ENCODE measurements at regions of chr1 and their contacts with region 1.

Region 1: DNA sequence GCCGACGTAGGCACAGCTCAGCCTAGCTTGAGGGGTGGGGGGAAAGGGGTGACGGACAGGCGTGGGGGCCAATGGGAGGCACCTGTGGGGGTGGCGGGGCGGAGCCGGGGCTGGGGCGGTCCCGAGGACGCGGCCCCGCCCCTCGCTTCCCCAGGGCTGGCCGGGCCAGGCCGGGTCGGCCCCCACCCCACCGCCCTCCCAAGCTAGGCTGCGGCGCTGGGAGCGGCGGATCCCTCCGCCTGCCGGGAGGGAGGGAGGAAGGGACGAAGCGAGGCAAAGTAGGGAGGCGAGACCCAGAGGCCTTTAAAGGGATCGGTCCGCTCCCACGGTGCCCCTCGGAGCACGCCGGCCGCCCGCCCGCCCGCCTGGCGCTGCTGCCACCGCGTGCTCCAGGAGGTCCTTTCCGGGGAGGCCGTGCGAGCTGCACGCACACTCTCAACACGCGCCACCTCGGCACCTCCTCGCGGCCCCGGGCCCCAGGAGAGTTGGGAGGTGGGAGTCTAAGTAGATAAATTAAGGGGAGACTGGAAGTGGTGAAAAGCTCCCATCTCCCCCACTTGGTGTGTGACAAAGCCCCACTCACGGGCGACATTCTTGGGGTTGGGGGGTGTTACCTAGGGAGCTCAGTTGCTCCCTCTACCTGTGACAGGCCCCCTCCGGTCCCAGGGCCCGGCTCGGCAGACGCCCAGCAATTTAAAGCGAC is 373 bp upstream of the MEF2D start:
- DNase-seq: peak; percentile 86 to 97 (median 94)
- ATAC-seq: peak; percentile 66
- H3K4me3 ChIP-seq: peak overlapping the region; percentile 87 to 92
- H3K4me3 Mint-ChIP-seq: peak overlapping the region; percentile 92
- H3K27ac ChIP-seq: peak overlapping the region; percentile 93 to 97
- H3K27ac Mint-ChIP-seq: peak overlapping the region; percentile 98
- H3K4me1 ChIP-seq: peaks cover 76% of the 10 kb centered on the region
- H3K4me1 Mint-ChIP-seq: peaks cover 76% of the 10 kb centered on the region
- H3K27me3 ChIP-seq: no peaks in the 10 kb centered on the region
- H3K27me3 Mint-ChIP-seq: no peaks in the 10 kb centered on the region
- CTCF ChIP-seq: peak; percentile 68

Region 2: GRCh38 chr1:156338180-156338973 is 162.6 kb before region 1 on chr1 and contains the starts of genes CCT3 and TSACC:
- CTCF ChIA-PET with region 1: no interaction called
- POLR2A ChIA-PET with region 1: no interaction called
- intact Hi-C with region 1: loop called (anchors 1 to 2 kb)
- DNase-seq: peak; percentile 97 to 100 (median 99)
- ATAC-seq: peak; percentile 95
- H3K4me3 ChIP-seq: peak within 1 kb of the TSS; percentile 69 to 85
- H3K4me3 Mint-ChIP-seq: peak within 1 kb of the TSS; percentile 95
- H3K27ac ChIP-seq: peak within 1 kb of the TSS; percentile 61 to 92
- H3K27ac Mint-ChIP-seq: peak within 1 kb of the TSS; percentile 95
- H3K4me1 ChIP-seq: peaks cover 25% of the 10 kb centered on the region
- H3K4me1 Mint-ChIP-seq: peaks cover 39% of the 10 kb centered on the region
- H3K27me3 ChIP-seq: no peaks in the 10 kb centered on the region
- H3K27me3 Mint-ChIP-seq: no peaks in the 10 kb centered on the region
- CTCF ChIP-seq: no peak
- total RNA-seq, gene CCT3: 49.2 to 53.4 TPM
- total RNA-seq, gene TSACC: 0.46 TPM in 1 of 2 experiments, not detected in the other

Region 3: DNA sequence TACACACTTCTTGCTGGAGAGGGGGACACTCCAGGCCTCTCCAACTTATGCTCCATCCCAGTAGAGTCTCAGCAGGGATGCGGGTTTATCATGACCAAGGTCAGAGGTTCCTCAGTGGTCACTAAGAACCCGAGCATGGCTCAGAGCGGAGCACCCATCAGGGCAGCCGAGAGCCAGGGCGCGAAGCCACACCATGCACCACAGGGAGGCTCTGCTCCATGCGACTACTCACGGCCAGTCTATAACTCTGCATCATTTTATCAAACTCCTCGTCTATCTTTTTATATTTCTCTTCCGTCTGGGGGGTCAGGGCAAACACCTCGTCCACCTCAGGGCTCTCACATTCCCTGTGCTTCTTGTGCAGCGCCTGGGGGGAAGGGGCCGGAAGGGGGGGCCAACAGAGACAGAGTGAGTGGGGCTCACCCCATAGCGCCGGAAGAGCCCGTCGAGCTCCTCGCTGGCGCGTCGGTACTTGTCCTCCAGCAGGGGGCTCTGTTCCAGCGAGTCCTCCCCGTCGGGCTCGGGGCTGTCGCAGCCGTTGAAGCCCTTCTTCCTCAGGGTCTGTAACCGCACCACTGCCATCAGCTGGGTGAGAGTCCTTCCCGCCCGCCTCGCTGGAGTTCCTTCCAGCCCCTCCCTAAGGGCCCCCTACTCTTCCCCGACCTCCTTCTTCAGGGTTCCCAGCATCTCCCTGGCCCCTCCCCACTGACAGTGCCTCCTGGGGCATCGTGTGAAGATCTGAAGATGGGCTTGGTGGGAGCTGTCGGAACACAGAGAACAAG is 20.3 kb before region 1 on chr1:
- CTCF ChIA-PET with region 1: interaction called, 66 read pairs
- POLR2A ChIA-PET with region 1: interaction called, 203 read pairs
- intact Hi-C with region 1: loop called (anchors 1 kb)
- DNase-seq: peak; percentile 55 to 89 (median 85)
- ATAC-seq: peak; percentile 87
- H3K4me3 ChIP-seq: no peak overlapping the region
- H3K4me3 Mint-ChIP-seq: no peak overlapping the region
- H3K27ac ChIP-seq: peak overlapping the region; percentile 22 to 52
- H3K27ac Mint-ChIP-seq: peak overlapping the region; percentile 89
- H3K4me1 ChIP-seq: peaks cover 22% of the 10 kb centered on the region
- H3K4me1 Mint-ChIP-seq: peaks cover 47% of the 10 kb centered on the region
- H3K27me3 ChIP-seq: no peaks in the 10 kb centered on the region
- H3K27me3 Mint-ChIP-seq: no peaks in the 10 kb centered on the region
- CTCF ChIP-seq: peak; percentile 79

Region 4: DNA sequence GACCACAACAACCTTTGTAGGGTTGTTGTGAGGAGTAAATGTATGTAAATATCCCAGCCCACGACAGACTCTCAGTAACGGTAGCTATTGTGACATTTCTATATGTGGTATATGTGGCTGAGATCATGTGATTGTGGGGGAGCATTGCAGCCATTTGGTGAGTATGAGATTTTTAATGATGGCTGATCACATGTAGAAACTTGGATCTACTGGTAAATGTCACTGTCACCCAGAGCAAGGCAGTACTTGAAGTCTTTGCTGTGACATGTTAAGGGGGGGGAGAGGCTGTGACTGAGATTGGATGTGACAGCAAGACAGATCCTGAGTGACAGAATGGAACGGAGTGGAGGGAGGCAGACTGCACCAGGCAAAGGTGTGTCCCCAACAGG is 23.5 kb after region 1 on chr1:
- CTCF ChIA-PET with region 1: interaction called, 8 read pairs
- POLR2A ChIA-PET with region 1: interaction called, 18 read pairs
- intact Hi-C with region 1: loop called in 1 of 2 experiments (anchors 2 kb)
- DNase-seq: peak in 3 of 9 experiments; percentile 49 to 76 (median 59)
- ATAC-seq: peak; percentile 69
- H3K4me3 ChIP-seq: no peak overlapping the region
- H3K4me3 Mint-ChIP-seq: peak overlapping the region; percentile 40
- H3K27ac ChIP-seq: peak overlapping the region in 1 of 2 experiments; percentile 59
- H3K27ac Mint-ChIP-seq: peak overlapping the region; percentile 63
- H3K4me1 ChIP-seq: peaks cover 41% of the 10 kb centered on the region
- H3K4me1 Mint-ChIP-seq: peaks cover 44% of the 10 kb centered on the region
- H3K27me3 ChIP-seq: no peaks in the 10 kb centered on the region
- H3K27me3 Mint-ChIP-seq: no peaks in the 10 kb centered on the region
- CTCF ChIP-seq: no peak

Region 5: DNA sequence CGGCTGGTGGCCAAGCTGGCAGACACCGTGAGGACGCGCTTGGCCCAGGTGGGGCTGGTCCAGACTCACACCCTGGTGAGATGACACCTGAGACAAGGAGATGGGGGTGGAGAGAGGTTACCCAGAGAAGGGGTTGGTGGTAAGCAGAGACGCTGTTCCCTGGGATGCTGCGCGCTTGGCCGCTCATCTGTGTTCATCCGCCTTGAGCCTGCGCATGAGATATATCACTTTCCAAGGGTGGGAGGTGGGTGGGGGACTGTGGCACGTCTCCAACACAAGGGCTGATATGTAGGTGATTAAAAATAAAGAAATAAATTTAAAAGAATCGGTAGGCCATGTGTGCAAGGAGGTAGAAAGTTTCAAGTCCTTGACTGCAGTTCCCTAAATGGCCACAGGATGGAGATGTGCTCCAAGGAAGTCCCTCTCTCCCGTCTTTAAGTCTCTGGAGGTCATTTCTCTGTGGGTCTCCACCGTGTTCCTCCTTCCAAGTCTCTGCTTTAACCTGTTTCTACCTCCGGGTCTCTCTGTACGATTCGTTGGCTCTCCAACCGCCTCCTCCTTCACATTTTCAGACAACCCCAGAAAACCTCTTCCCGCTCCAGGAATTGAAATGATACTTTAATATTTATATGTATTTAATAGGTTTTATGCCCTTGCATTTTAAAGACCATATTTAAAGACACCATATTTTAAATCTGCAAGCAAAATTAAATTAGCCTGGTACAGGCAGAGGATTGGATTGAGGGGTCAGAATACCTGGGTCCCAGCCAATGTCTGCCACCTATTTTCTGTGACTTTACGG is 83.1 kb after region 1 on chr1:
- CTCF ChIA-PET with region 1: interaction called, 16 read pairs
- POLR2A ChIA-PET with region 1: interaction called, 47 read pairs
- intact Hi-C with region 1: loop called (anchors 1 to 5 kb)
- DNase-seq: peak; percentile 52 to 89 (median 78)
- ATAC-seq: peak; percentile 53
- H3K4me3 ChIP-seq: peak overlapping the region in 1 of 2 experiments; percentile 8
- H3K4me3 Mint-ChIP-seq: peak overlapping the region; percentile 61
- H3K27ac ChIP-seq: peak overlapping the region in 1 of 2 experiments; percentile 85
- H3K27ac Mint-ChIP-seq: peak overlapping the region; percentile 81
- H3K4me1 ChIP-seq: peaks cover 28% of the 10 kb centered on the region
- H3K4me1 Mint-ChIP-seq: peaks cover 38% of the 10 kb centered on the region
- H3K27me3 ChIP-seq: no peaks in the 10 kb centered on the region
- H3K27me3 Mint-ChIP-seq: no peaks in the 10 kb centered on the region
- CTCF ChIP-seq: peak; percentile 80

Region 6: GRCh38 chr1:156740679-156741612 is 240.0 kb after region 1 on chr1 and contains the start of gene MRPL24:
- CTCF ChIA-PET with region 1: no interaction called
- POLR2A ChIA-PET with region 1: interaction called, 9 read pairs
- intact Hi-C with region 1: loop called in 1 of 2 experiments (anchors 2 kb)
- DNase-seq: peak; percentile 88 to 100 (median 96)
- ATAC-seq: peak; percentile 88
- H3K4me3 ChIP-seq: peak within 1 kb of the TSS; percentile 60 to 68
- H3K4me3 Mint-ChIP-seq: peak within 1 kb of the TSS; percentile 97
- H3K27ac ChIP-seq: peak within 1 kb of the TSS; percentile 55 to 81
- H3K27ac Mint-ChIP-seq: peak within 1 kb of the TSS; percentile 98
- H3K4me1 ChIP-seq: peaks cover 13% of the 10 kb centered on the region
- H3K4me1 Mint-ChIP-seq: peaks cover 38% of the 10 kb centered on the region
- H3K27me3 ChIP-seq: no peaks in the 10 kb centered on the region
- H3K27me3 Mint-ChIP-seq: no peaks in the 10 kb centered on the region
- CTCF ChIP-seq: no peak
- total RNA-seq, gene MRPL24: 9.1 to 12.5 TPM

Region 7: GRCh38 chr1:156760097-156760803 is 259.3 kb after region 1 on chr1:
- CTCF ChIA-PET with region 1: no interaction called
- POLR2A ChIA-PET with region 1: no interaction called
- intact Hi-C with region 1: no loop called
- DNase-seq: no peak
- ATAC-seq: no peak
- H3K4me3 ChIP-seq: no peak overlapping the region
- H3K4me3 Mint-ChIP-seq: no peak overlapping the region
- H3K27ac ChIP-seq: no peak overlapping the region
- H3K27ac Mint-ChIP-seq: no peak overlapping the region
- H3K4me1 ChIP-seq: no peaks in the 10 kb centered on the region
- H3K4me1 Mint-ChIP-seq: no peaks in the 10 kb centered on the region
- H3K27me3 ChIP-seq: no peaks in the 10 kb centered on the region
- H3K27me3 Mint-ChIP-seq: no peaks in the 10 kb centered on the region
- CTCF ChIP-seq: no peak

Region 8: GRCh38 chr1:156813750-156814570 is 313.0 kb after region 1 on chr1:
- CTCF ChIA-PET with region 1: no interaction called
- POLR2A ChIA-PET with region 1: no interaction called
- intact Hi-C with region 1: loop called (anchors 2 to 5 kb)
- DNase-seq: peak; percentile 47 to 90 (median 78)
- ATAC-seq: peak; percentile 56
- H3K4me3 ChIP-seq: peak overlapping the region; percentile 75
- H3K4me3 Mint-ChIP-seq: peak overlapping the region; percentile 84
- H3K27ac ChIP-seq: peak overlapping the region; percentile 91 to 99
- H3K27ac Mint-ChIP-seq: peak overlapping the region; percentile 99
- H3K4me1 ChIP-seq: peaks cover 53% of the 10 kb centered on the region
- H3K4me1 Mint-ChIP-seq: peaks cover 69% of the 10 kb centered on the region
- H3K27me3 ChIP-seq: no peaks in the 10 kb centered on the region
- H3K27me3 Mint-ChIP-seq: no peaks in the 10 kb centered on the region
- CTCF ChIP-seq: peak; percentile 68

Measured in CD8-positive, alpha-beta T cell (primary cell).